Mucosa of descending colon (tissue), 3 donors: ENCODE measurements at regions of chr15 and their contacts with region 1.

Region 1: GRCh38 chr15:84826369-84826823 is 9.2 kb downstream of the ALPK3 start:
- DNase-seq: peak in 2 of 3 donors; percentile 59 to 62
- ATAC-seq: peak; percentile 86
- H3K4me3 ChIP-seq: no peak overlapping the region
- H3K4me1 ChIP-seq: no peaks in the 10 kb centered on the region
- CTCF ChIP-seq: no peak

Region 2: DNA sequence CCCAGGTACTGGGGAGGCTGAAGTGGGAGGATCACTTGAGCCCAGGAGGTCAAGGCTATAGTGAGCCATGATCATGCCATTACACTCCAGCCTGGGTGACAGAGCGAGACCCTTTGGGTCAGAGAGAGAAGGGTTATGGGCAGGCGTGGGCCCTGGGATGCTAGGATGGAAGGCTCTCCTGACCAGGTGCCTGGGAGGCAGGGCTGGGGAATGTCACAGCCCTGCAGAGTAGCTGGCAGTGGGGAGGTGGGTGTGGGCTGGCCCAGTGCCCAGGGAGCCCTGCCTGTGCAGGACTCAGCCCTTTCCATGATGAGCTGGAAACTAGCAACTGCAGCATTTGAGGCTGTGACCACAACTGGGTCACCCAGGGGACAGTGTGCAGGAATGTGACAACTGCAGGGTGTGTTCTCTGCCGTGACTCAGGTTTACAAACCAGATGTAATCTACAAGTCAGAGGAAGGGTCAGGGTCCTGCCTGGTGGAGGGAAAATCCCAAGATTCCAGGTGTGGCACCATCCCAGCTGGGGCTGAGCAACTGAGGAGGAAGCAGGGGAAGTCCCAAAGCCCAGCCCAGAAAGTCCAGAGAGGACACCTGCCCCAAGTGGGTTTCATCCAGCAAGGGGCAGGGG is 103.5 kb after region 1 on chr15:
- intact Hi-C with region 1: loop called in 1 of 2 experiments (anchors 10 kb)
- DNase-seq: peak; percentile 73 to 77 (median 75)
- ATAC-seq: peak; percentile 94
- H3K4me3 ChIP-seq: no peak overlapping the region
- H3K4me1 ChIP-seq: peaks cover 10% of the 10 kb centered on the region
- CTCF ChIP-seq: no peak